Activated naive CD4-positive, alpha-beta T cell treated with anti-CD3 and anti-CD28 coated beads for 36 hours (primary cell): ENCODE measurements at regions of chr17 and their contacts with region 1.

Region 1: GRCh38 chr17:78745407-78746088 is 36.5 kb downstream of the CYTH1 start:
- DNase-seq: peak; percentile 72
- H3K4me3 Mint-ChIP-seq: peak overlapping the region; percentile 8
- H3K27ac Mint-ChIP-seq: peak overlapping the region; percentile 95
- H3K4me1 Mint-ChIP-seq: peaks cover 91% of the 10 kb centered on the region
- H3K27me3 Mint-ChIP-seq: no peaks in the 10 kb centered on the region

Region 2: DNA sequence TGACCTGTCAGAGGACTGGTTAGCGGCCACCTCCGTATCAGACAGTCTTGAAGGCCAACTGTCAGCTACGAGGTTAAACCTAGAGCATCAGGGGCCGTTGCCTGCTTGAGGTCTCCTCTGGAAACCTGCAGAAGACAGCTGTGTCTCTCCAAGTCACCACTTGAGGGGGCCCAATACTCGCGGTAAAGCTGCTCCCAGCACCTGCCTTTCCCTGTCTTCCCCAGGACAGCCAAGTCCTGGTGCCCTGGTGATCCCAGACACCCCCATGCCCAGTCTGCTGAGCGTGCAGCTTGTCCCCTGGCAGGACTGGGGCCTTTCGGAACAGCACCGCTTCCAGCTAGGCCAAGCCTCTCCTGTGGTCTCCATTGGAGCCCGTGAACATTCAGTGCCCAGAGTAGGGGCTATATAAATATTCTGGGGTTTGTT is 248.4 kb before region 1 on chr17:
- CTCF ChIA-PET with region 1: no interaction called
- intact Hi-C with region 1: loop called (anchors 1 kb)
- DNase-seq: peak; percentile 76
- H3K4me3 Mint-ChIP-seq: no peak overlapping the region
- H3K27ac Mint-ChIP-seq: no peak overlapping the region
- H3K4me1 Mint-ChIP-seq: no peaks in the 10 kb centered on the region
- H3K27me3 Mint-ChIP-seq: no peaks in the 10 kb centered on the region

Region 3: DNA sequence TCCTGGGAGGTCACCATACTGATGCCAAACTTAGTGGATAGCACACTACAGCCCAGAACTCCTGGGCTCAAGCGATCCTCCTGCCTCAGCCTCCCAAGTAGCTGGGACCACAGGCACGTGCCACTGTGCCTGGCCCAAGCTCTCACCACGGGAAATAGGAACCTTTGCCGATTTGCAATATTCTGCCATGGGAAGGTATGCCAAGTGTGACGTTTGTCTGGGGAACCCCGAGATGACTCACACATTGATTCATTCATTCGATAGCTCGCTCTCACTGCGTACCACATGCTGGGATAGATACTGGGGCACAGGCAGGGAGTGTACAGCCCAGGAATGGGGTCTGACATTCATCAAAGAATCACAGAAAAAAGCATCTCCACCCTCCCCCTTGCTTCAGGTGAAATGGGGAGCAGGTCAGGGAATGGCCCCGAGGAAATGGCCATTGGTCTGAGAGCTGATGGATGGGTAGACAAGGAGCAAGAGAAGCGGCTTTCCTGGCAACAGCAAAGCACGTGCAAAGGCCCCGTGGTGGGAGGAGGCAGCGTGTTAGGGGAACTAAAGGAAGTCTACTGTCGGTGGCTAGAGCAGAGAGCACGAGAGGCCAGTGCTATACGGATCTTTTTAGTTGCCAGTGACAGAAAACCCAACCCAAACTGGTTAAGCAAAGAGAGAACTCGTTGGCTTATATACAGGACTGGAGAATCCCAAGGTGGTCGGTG is 212.5 kb before region 1 on chr17:
- CTCF ChIA-PET with region 1: no interaction called
- intact Hi-C with region 1: no loop called
- DNase-seq: peak; percentile 49
- H3K4me3 Mint-ChIP-seq: no peak overlapping the region
- H3K27ac Mint-ChIP-seq: no peak overlapping the region
- H3K4me1 Mint-ChIP-seq: peaks cover 24% of the 10 kb centered on the region
- H3K27me3 Mint-ChIP-seq: no peaks in the 10 kb centered on the region

Region 4: DNA sequence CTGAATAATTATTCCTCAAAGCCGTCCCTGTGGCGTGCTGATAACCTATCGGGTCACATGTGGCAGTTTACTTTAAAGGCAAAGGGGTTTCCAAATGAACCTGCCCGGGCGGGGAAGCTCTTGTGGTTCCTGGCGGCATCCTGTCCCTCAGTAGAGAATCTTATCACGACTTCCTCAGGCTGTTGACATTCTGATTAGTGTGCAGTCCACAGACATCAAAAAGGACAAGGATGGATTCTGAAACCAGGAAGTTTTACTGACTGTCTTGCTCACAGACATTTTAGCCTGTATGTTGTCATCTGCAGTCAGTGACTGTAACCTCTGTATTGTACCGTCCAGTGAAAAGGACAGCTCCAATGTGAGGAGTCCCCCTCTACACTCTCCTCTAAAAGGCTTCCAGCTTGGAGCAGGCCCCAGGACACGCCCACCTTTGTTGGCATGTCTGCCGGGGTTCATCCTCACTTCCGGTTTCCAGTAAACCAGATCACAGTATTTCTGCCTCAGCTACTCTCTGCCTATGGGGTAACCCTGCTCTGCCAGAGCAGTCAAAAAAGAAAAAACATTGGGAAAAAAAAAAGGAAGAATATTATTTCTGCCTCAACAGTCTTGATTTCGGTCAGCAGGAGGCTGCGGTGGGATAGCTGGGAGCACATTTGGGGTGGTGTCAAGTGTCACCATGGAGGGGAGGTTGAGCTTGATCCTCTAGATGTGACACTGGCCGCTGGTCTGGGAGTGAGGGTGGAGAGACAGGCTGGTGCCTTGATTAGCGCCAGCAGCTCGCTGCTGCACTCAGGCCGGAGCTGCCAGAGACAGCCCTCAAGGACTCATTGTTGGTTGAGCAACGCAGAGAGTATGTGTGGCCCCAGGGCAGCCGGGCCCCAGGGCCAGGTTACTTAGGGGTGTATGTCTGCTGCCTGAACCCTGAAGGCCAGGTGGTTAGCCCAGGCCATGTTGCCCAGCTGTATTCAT is 79.3 kb before region 1 on chr17:
- CTCF ChIA-PET with region 1: no interaction called
- intact Hi-C with region 1: loop called (anchors 5 kb)
- DNase-seq: peak; percentile 91
- H3K4me3 Mint-ChIP-seq: no peak overlapping the region
- H3K27ac Mint-ChIP-seq: peak overlapping the region; percentile 78
- H3K4me1 Mint-ChIP-seq: peaks cover 21% of the 10 kb centered on the region
- H3K27me3 Mint-ChIP-seq: no peaks in the 10 kb centered on the region

Region 5: GRCh38 chr17:78716814-78717393 is 28.6 kb before region 1 on chr17:
- CTCF ChIA-PET with region 1: interaction called, 14 read pairs
- intact Hi-C with region 1: loop called (anchors 1 kb)
- DNase-seq: peak; percentile 60
- H3K4me3 Mint-ChIP-seq: peak overlapping the region; percentile 59
- H3K27ac Mint-ChIP-seq: peak overlapping the region; percentile 90
- H3K4me1 Mint-ChIP-seq: peaks cover 89% of the 10 kb centered on the region
- H3K27me3 Mint-ChIP-seq: no peaks in the 10 kb centered on the region

Region 6: DNA sequence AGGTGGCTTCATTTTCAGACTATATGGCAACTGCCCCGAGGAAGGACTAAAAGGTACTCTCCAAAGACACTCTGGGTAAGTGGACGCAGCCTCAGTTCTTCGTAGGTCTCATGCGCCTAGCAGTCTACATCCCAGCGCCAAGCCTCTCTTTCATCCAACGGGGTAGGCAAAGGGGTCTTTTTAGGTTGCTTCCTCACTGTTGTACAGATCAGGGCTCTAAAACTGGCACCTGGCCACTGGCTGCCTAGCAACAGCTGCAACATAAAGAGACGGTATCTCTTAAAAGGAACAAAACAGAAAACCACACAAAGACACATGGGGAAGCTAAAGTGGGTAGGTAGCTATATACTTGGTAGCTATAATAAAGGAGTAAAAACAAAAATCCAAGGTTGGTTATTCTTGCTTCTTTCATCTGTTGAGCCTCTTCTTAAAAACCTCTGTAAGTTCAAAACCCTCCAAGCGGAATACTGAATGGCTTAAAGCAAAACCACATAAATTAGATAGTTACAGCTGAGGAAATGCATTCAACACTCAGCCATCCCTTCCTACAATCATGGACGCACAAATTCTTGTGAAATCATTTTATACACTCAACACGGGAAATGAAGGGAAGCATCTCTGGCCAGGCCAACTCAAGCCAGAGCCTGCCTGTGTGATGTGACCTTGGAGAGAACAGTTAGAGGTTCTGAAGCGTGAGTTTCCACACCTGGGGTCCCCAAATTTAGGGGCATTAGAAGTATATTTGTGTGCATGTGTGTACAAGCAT is 13.8 kb after region 1 on chr17:
- CTCF ChIA-PET with region 1: interaction called, 3 read pairs
- intact Hi-C with region 1: loop called (anchors 1 kb)
- DNase-seq: peak; percentile 86
- H3K4me3 Mint-ChIP-seq: peak overlapping the region; percentile 70
- H3K27ac Mint-ChIP-seq: peak overlapping the region; percentile 95
- H3K4me1 Mint-ChIP-seq: peaks cover 83% of the 10 kb centered on the region
- H3K27me3 Mint-ChIP-seq: no peaks in the 10 kb centered on the region

Region 7: DNA sequence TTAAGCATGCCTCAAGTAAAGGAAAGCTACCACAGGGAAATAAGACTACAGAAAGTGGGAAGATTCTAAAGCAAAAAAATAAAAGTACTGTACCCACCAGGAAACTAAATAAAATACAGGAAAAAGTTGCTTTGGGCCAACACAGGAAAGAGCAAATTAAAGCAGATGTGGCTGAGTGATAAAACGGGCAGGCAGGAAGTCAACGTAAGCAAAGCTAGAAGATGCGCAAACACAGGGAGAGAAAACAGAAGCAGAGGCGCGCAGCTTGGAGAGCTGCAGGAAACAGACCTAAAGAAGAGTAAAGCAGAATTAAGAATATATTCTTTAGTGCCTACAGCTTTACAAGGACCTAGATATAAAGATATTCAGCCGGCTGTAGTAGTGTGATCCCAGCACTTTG is 73.4 kb after region 1 on chr17:
- CTCF ChIA-PET with region 1: no interaction called
- intact Hi-C with region 1: loop called (anchors 1 kb)
- DNase-seq: peak; percentile 66
- H3K4me3 Mint-ChIP-seq: peak overlapping the region; percentile 45
- H3K27ac Mint-ChIP-seq: peak overlapping the region; percentile 85
- H3K4me1 Mint-ChIP-seq: peaks cover 53% of the 10 kb centered on the region
- H3K27me3 Mint-ChIP-seq: no peaks in the 10 kb centered on the region

Region 8: GRCh38 chr17:78873519-78874340 is 128.2 kb after region 1 on chr17:
- CTCF ChIA-PET with region 1: no interaction called
- intact Hi-C with region 1: no loop called
- DNase-seq: no peak
- H3K4me3 Mint-ChIP-seq: no peak overlapping the region
- H3K27ac Mint-ChIP-seq: no peak overlapping the region
- H3K4me1 Mint-ChIP-seq: peaks cover 5% of the 10 kb centered on the region
- H3K27me3 Mint-ChIP-seq: no peaks in the 10 kb centered on the region

Region 9: DNA sequence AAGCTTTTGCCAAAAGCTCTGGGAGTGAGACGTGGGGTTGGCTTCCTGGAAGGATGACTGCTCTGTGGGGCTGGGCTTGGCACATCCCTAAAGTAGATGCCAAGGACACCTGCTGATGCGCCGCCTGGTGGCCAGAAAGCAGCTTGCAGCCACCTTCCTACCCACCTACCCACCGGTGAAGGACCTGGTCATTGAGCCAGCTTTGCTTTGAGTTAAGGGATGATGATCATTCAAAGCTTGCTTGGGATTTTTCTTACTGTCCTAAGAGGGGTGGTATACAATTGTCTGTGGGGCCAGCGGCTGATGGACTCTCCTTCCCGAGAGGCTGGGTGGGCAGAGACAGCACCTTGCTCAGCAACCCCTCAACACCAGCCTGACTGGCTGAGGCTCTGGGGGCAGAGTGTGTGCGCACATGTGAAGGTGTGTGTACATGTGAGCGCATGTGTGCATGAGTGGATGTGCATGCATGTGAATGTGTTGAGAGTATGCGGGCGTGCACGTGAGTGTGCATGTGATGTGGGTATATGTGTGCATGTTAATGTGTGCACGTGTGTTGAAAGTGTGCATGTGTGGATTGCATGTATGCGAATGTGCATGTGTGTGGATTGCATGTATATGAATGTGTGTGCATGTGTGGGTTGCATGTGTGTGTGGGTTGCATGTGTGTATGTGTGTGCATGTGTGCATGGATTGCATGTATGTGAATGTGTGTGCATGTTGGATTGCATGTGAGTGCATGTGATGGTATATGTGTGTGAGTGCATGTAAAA is 297.1 kb after region 1 on chr17:
- CTCF ChIA-PET with region 1: no interaction called
- intact Hi-C with region 1: no loop called
- DNase-seq: peak; percentile 81
- H3K4me3 Mint-ChIP-seq: no peak overlapping the region
- H3K27ac Mint-ChIP-seq: no peak overlapping the region
- H3K4me1 Mint-ChIP-seq: no peaks in the 10 kb centered on the region
- H3K27me3 Mint-ChIP-seq: peaks cover 3% of the 10 kb centered on the region